ENCODE measurements at regions of chr14 and their contacts with region 1.

Region 1: GRCh38 chr14:66507722-66508546 is at the start of gene GPHN:
- DNase-seq: peak; percentile 97
- ATAC-seq: peak; percentile 97
- total RNA-seq, gene GPHN: 25.0 TPM

Region 2: GRCh38 chr14:66117585-66117984 is 390.3 kb before region 1 on chr14:
- intact Hi-C with region 1: no loop called
- DNase-seq: no peak
- ATAC-seq: no peak

Region 3: GRCh38 chr14:66568220-66568619 is 60.3 kb after region 1 on chr14:
- intact Hi-C with region 1: loop called (anchors 5 kb)
- DNase-seq: no peak
- ATAC-seq: no peak